Mammary epithelial cell (primary cell): ENCODE measurements at regions of chr1 and their contacts with region 1.

Region 1: GRCh38 chr1:58755468-58755872 is 28.4 kb downstream of the JUN start:
- DNase-seq: peak; percentile 98
- H3K4me3 ChIP-seq: no peak overlapping the region
- H3K27ac ChIP-seq: peak overlapping the region; percentile 65
- H3K4me1 ChIP-seq: peaks cover 42% of the 10 kb centered on the region
- H3K27me3 ChIP-seq: no peaks in the 10 kb centered on the region
- CTCF ChIP-seq: no peak

Region 2: DNA sequence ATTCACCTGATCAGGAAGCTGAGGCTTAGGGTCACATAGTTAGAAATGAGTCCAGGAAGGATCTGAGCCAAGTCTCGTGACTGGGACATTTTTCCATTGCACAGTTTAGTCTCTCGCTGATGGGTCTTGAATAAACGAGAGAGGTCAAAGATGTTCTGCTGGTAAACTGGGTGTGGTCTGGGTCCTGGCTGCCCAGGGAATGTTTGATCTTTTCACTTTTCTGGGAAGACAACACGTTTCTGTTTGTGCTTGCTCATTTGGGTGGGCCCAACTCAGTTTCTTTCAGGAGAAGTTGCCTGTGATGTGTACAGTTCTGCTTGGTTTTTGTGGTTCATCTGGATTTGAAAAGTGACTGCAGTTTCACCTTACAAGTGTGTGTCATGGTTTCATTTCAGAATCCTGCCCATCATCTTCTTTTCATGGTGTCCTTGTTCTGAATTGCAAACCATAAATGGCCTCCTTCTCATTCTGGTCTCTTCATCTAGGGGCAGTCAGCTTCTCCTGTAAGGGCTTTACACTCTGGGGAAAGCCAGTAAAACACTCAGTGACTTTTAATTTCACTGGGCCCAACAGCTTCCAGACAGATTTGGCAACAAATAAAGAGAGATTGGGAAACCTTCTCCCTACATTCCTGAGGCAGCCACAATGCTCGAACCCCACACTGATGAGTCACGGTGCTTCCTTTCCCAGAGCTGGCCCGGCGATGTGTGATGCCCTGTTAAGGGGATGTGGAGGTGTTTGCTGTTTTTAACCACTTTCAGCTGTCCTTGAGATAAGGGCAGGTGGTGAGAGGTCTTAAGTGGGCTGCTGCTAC is 171.2 kb before region 1 on chr1:
- CTCF ChIA-PET with region 1: no interaction called
- dilution Hi-C with region 1: no loop called
- in situ Hi-C with region 1: no loop called
- intact Hi-C with region 1: loop called (anchors 1 kb)
- DNase-seq: peak; percentile 98
- H3K4me3 ChIP-seq: peak overlapping the region in 2 of 3 experiments; percentile 12 to 14
- H3K27ac ChIP-seq: peak overlapping the region; percentile 97
- H3K4me1 ChIP-seq: peaks cover 38% of the 10 kb centered on the region
- H3K27me3 ChIP-seq: no peaks in the 10 kb centered on the region
- CTCF ChIP-seq: no peak

Region 3: DNA sequence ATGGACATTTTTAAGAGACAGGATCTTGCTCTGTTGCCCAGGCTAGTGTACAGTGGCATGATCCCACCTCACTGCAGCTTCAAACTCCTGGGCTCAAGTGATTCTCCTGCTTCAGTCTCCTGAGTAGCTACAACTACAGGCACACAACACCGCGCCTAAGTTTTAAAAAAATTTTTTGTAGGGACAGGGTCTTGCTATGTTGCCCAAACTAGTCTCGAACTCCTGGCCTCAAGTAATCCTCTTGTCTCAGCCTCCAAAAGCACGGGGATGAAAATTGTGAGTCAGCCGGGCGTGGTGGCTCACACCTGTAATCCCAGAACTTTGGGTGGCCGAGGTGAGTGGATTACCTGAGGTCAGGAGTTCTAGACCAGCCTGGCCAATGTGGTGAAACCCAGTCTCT is 76.0 kb before region 1 on chr1:
- CTCF ChIA-PET with region 1: no interaction called
- dilution Hi-C with region 1: no loop called
- in situ Hi-C with region 1: no loop called
- intact Hi-C with region 1: no loop called
- DNase-seq: no peak
- H3K4me3 ChIP-seq: no peak overlapping the region
- H3K27ac ChIP-seq: no peak overlapping the region
- H3K4me1 ChIP-seq: no peaks in the 10 kb centered on the region
- H3K27me3 ChIP-seq: no peaks in the 10 kb centered on the region
- CTCF ChIP-seq: no peak

Region 4: DNA sequence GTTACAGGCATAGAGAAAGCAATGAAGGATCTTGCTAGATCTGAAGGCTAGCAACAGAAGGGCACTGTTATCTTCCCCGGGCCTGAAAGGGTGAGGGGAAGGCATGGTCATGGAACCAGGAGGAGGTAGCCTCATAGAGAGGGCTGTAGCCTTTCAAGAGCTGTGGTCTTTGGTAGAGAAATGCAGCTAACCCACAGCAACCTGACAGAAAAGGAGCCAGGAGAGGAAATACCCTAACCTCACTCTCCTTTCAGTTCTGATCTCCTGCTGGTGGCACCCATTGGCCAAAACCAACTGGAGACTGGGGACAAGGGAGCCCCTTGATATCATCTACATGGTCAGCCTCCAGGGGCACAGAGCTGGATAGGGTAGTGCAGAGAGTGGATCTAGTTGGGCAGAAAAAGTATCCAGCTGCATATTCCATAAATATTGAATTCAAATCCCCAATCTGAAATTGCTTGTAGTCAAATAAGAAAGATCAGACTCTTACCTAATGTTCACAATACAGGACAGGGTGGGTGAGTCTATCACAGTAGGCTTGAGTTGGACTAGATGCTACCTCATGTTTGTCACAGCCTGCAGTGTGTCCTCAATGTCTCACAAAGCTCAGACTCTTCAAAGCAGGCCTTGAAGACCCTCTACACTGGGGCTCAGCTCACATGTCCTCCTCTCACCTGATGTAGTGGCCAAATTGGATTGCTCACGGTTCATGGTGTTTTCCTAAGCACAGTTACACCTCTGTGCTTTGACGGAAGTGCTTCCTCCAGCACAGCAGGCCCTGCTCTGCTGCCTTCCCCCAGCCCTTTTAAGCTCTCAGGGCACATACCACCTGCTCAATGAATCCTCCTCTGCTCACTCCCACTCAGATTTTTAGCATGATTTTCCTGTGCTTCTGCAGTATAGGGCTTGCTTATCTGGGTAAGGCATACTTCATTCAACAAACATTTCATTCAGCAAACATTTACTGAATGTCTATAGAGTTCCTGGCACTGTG is 102.5 kb after region 1 on chr1:
- CTCF ChIA-PET with region 1: no interaction called
- dilution Hi-C with region 1: no loop called
- in situ Hi-C with region 1: no loop called
- intact Hi-C with region 1: no loop called
- DNase-seq: no peak
- H3K4me3 ChIP-seq: no peak overlapping the region
- H3K27ac ChIP-seq: no peak overlapping the region
- H3K4me1 ChIP-seq: peaks cover 16% of the 10 kb centered on the region
- H3K27me3 ChIP-seq: no peaks in the 10 kb centered on the region
- CTCF ChIP-seq: no peak

Region 5: GRCh38 chr1:59005491-59006283 is 250.2 kb after region 1 on chr1:
- CTCF ChIA-PET with region 1: interaction called, 22 read pairs
- dilution Hi-C with region 1: no loop called
- in situ Hi-C with region 1: no loop called
- intact Hi-C with region 1: no loop called
- DNase-seq: no peak
- H3K4me3 ChIP-seq: no peak overlapping the region
- H3K27ac ChIP-seq: no peak overlapping the region
- H3K4me1 ChIP-seq: peaks cover 3% of the 10 kb centered on the region
- H3K27me3 ChIP-seq: no peaks in the 10 kb centered on the region
- CTCF ChIP-seq: no peak